ENCODE measurements at regions of chr20 and their contacts with region 1.

Region 1: GRCh38 chr20:51810155-51811041 is 8.1 kb upstream of the SALL4 start:
- DNase-seq: no peak
- CTCF ChIP-seq: no peak

Region 2: GRCh38 chr20:51800060-51800794 is 10.2 kb before region 1 on chr20:
- CTCF ChIA-PET with region 1: interaction called, 12 read pairs
- POLR2A ChIA-PET with region 1: no interaction called
- DNase-seq: peak; percentile 78
- CTCF ChIP-seq: peak; percentile 70